A673 (cell line): ENCODE measurements at regions of chr7 and their contacts with region 1.

Region 1: GRCh38 chr7:96118449-96119001 is 203.4 kb downstream of the SLC25A13 start:
- DNase-seq: no peak
- H3K4me3 ChIP-seq: no peak overlapping the region
- H3K27ac ChIP-seq: no peak overlapping the region
- H3K4me1 ChIP-seq: no peaks in the 10 kb centered on the region
- H3K27me3 ChIP-seq: no peaks in the 10 kb centered on the region
- CTCF ChIP-seq: no peak

Region 2: DNA sequence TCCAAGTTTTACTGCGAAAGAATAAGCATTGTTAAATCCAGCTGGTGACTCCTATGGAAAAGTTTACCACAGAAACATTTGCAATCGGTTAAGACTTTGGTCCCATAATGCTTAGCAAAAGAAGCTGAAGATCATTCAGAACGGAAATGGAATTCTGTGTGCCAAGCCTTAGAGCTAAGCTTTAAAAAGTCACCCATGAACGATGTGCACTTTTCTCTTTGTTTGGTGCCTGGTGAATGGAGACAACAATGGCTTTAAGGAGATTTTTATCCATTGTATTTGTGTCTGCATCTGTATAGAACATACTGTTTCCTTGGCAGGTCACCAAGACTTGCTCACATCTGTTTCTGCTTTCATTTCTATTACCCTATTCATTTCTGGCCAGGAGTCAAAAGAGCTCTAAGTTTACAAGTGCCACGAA is 1750.1 kb before region 1 on chr7:
- CTCF ChIA-PET with region 1: no interaction called
- POLR2A ChIA-PET with region 1: interaction called, 10 read pairs
- intact Hi-C with region 1: no loop called
- DNase-seq: peak; percentile 93
- H3K4me3 ChIP-seq: peak overlapping the region; percentile 15
- H3K27ac ChIP-seq: peak overlapping the region; percentile 94
- H3K4me1 ChIP-seq: peaks cover 38% of the 10 kb centered on the region
- H3K27me3 ChIP-seq: no peaks in the 10 kb centered on the region
- CTCF ChIP-seq: no peak

Region 3: DNA sequence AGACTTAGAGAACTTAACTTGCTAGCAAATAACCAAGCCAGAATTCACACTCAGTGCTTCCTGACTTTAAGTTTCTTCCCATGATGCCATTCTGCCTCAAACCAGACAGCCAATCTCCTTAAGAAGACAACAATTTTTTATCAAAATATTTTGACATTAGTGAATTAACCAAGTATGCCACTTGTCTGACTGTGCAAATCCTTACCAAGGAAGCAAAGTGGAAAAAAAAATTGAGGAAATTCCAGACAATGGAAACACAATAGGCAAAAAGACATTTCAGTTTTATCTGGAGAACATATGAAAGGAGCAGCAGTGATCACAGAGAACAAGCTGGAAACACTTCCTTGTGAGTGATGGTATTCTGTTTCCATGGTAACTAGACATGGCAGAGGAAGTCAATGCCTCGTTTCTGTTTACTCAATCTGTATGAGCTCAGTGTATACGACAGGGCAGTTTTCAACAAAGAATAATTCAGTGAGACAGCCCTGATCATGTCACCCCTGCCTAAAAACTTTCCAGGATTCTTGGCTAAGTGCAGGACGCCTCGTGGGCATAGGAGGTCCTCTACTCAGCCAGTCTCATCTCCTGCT is 231.9 kb before region 1 on chr7:
- CTCF ChIA-PET with region 1: no interaction called
- POLR2A ChIA-PET with region 1: no interaction called
- intact Hi-C with region 1: no loop called
- DNase-seq: peak; percentile 43
- H3K4me3 ChIP-seq: no peak overlapping the region
- H3K27ac ChIP-seq: no peak overlapping the region
- H3K4me1 ChIP-seq: peaks cover 21% of the 10 kb centered on the region
- H3K27me3 ChIP-seq: no peaks in the 10 kb centered on the region
- CTCF ChIP-seq: no peak